ENCODE measurements at regions of chr10 and their contacts with region 1.

Region 1: DNA sequence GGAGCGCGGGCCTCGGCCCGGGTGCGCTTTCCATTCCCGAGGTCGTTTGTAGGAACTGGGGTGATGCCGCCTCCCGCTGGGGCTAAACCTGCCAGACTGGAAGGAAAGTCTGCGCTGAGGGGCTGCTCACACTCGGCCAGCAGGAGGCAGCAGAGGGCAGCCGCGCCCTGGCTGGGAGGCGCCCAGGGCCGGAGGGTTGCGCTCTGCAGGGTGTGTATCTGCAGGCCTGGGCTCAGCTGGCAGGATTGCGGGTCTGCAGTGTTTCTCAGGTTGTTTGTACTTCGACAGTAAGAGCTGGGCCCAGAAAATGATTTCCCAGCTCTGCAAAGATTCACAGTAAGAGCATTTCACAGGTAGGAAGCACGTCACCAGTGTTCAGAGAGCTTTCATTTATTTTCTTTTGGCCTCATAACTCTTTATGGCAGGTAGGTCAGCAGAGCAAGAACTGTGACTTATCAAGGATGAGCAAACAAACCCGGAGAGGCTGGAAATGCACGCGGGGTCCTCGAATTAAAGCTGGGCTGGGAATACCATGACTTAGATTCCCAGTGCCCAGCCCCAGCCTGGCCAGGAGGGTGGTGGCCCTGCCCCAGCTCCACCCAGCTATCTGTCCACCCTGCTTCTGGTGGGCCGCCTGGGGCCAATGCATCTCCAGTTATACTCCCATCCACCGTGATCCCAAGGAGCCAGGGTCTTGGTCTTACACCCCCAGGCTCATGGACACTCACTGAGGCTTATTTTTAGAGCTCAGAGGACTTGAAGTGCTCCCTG is 15.2 kb upstream of the PPP2R2D start:
- DNase-seq: peak; percentile 81
- H3K4me3 ChIP-seq: no peak overlapping the region
- H3K27ac ChIP-seq: no peak overlapping the region
- H3K4me1 ChIP-seq: no peaks in the 10 kb centered on the region
- H3K27me3 ChIP-seq: no peaks in the 10 kb centered on the region
- CTCF ChIP-seq: peak; percentile 89 to 94 (median 92)
- POLR2A ChIP-seq: no peak

Region 2: GRCh38 chr10:132023092-132023811 is 137.7 kb after region 1 on chr10:
- intact Hi-C with region 1: loop called (anchors 5 kb)
- DNase-seq: peak; percentile 85
- H3K4me3 ChIP-seq: peak overlapping the region in 1 of 2 donors; percentile 10
- H3K27ac ChIP-seq: no peak overlapping the region
- H3K4me1 ChIP-seq: no peaks in the 10 kb centered on the region
- H3K27me3 ChIP-seq: no peaks in the 10 kb centered on the region
- CTCF ChIP-seq: peak; percentile 75 to 88 (median 81)
- POLR2A ChIP-seq: no peak

Region 3: DNA sequence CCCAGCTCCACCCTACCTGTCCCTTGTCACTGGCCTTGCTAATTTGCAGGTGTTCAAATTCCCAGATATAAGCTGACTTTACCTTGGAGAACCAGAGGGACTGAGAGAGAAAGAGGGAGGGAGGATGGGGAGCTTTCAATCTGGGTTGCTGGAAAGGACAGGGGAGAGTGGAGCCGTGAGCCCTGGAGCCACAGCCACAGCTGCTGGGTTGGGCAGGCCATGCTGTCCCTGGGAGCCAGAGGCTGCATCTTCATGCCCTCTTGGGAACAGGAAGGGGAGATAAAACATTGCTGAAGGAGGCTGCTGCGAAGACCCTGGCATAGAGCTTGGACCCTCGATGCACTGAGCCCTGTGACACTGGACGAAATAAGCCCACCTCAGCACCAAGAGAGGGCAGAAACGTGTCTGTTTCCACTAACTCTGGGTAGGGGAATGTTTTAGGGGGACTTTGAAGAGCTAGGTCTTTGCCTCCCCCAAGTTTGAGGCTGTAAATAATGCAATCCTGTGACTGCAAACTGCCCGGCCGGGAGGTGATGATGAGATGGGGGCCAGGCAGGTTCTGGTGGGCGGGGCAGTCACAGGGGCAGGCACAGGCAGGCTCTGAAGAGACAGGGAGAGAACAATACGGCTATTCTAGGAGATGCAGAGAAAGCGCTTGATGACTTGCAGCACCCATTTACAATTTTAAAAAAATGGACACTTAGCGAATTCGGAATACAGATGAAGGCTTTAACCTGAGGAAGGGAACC is 174.4 kb after region 1 on chr10:
- intact Hi-C with region 1: no loop called
- DNase-seq: no peak
- H3K4me3 ChIP-seq: no peak overlapping the region
- H3K27ac ChIP-seq: no peak overlapping the region
- H3K4me1 ChIP-seq: no peaks in the 10 kb centered on the region
- H3K27me3 ChIP-seq: no peaks in the 10 kb centered on the region
- CTCF ChIP-seq: no peak
- POLR2A ChIP-seq: no peak

Region 4: DNA sequence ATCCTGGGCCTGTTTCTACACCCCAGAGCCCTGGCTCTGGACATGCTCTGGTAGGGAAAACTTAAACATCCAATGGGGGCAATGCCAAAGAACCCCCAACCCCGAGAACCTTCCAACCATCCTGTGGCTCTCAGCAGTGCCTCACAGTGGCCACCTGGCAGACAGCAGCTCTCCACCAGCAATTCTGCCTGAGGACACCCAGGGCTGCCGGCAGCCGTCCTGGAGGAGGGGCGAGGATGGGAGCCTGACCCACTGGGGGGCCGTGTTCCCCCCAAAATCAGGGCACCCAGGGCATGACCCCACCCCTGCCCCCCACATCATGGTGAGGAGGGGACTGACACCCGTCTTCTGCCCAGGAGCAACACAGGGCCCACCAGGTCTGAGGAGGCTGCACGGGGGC is 333.9 kb after region 1 on chr10:
- intact Hi-C with region 1: no loop called
- DNase-seq: no peak
- H3K4me3 ChIP-seq: no peak overlapping the region
- H3K27ac ChIP-seq: no peak overlapping the region
- H3K4me1 ChIP-seq: no peaks in the 10 kb centered on the region
- H3K27me3 ChIP-seq: no peaks in the 10 kb centered on the region
- CTCF ChIP-seq: no peak
- POLR2A ChIP-seq: no peak

Measured in testis (tissue), 5 donors.